Sigmoid colon (tissue), 7 donors: ENCODE measurements at regions of chr14 and their contacts with region 1.

Region 1: DNA sequence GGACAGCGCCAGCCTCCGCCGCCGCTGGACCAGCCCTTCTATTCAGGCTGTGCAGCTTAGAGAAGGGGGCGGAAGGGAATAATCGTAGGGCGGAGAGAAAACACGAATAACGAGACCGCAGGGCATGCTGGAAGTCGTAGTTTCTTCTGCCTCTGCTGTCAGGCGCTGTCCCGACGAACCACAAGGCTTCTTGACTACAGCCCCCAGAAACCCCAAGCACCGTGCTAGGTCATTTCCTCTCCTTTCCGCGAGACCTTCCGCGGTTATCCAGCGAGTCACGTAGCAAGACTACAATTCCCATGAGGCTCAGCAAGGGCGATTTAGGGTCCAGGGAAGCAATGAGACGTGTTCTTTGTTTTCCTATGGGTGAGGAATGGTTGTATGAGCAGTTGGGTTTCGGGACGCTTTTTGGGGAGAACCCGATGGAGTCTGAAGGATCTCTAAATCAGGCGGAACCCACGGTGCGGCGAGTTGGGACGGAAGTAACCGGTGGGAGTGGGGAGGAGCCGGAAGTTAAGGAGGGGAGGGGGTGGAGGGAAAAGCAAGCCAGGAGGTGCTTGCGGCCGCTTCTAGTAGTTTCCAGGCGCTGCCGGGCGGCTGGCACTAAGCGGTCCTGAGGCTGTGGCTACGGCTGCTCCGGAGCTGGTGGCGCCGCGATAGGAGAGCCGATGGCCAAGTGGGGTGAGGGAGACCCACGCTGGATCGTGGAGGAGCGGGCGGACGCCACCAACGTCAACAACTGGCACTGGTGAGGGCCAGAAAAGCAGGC is at the starts of genes AHSA1 and VIPAS39:
- DNase-seq: peak; percentile 98
- H3K4me3 ChIP-seq: peak within 1 kb of the TSS; percentile 61 to 90 (median 84)
- H3K27ac ChIP-seq: peak within 1 kb of the TSS; percentile 85 to 96 (median 90)
- H3K4me1 ChIP-seq: peaks cover 0 to 32% (median 20%) of the 10 kb centered on the region in 4 donors
- H3K27me3 ChIP-seq: no peaks in the 10 kb centered on the region
- CTCF ChIP-seq: no peak
- EP300 ChIP-seq: no peak
- POLR2A ChIP-seq: peak; percentile 52 to 71
- total RNA-seq, gene AHSA1: 98.5 to 120 (median 104) TPM
- total RNA-seq, gene VIPAS39: 18.0 to 24.3 (median 22.8) TPM

Region 2: DNA sequence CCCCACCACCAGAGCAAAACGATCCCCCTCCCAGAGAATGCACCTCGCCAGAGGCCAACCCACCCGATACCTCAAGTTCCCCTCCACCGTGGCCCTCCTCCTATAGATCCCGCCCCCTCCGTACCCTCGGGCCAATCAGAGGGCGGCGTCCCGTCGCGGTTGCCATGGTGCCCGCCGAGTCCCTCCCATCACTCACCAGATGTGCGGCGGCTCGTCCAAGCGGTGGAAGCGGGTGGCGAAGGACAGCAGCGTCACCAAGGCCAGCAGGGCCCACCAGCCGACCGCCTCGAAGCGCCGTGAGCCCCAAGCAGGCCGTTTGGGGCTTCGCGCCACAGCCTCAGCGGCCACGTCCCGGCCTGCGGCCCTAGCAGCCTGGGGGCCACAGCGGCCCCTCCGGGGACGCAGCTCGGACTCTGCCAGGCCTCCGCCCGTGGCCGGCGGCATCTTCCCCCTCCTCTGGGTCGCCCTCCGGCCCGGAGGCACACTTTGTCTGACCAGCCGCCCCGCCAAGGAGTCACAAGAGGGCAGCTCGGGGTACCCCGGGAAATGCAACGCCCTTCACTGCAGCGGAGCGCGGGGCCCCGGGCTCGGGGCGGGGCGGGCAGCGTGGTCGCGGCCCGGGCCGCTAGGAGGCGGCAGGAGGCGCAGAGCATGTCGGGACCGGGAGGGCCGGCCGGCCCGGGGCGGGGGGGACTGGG is 137.3 kb before region 1 on chr14 and contains the start of gene POMT2:
- intact Hi-C with region 1: loop called (anchors 2 kb)
- DNase-seq: peak; percentile 97
- H3K4me3 ChIP-seq: peak within 1 kb of the TSS; percentile 87 to 99 (median 96)
- H3K27ac ChIP-seq: peak within 1 kb of the TSS; percentile 94 to 99 (median 96)
- H3K4me1 ChIP-seq: peaks cover 0 to 32% (median 28%) of the 10 kb centered on the region in 4 donors
- H3K27me3 ChIP-seq: no peaks in the 10 kb centered on the region
- CTCF ChIP-seq: peak in 3 of 4 experiments; percentile 13 to 52 (median 51)
- EP300 ChIP-seq: no peak
- POLR2A ChIP-seq: peak; percentile 32 to 41
- total RNA-seq, gene POMT2: 10.5 to 21.0 (median 16.4) TPM

Region 3: DNA sequence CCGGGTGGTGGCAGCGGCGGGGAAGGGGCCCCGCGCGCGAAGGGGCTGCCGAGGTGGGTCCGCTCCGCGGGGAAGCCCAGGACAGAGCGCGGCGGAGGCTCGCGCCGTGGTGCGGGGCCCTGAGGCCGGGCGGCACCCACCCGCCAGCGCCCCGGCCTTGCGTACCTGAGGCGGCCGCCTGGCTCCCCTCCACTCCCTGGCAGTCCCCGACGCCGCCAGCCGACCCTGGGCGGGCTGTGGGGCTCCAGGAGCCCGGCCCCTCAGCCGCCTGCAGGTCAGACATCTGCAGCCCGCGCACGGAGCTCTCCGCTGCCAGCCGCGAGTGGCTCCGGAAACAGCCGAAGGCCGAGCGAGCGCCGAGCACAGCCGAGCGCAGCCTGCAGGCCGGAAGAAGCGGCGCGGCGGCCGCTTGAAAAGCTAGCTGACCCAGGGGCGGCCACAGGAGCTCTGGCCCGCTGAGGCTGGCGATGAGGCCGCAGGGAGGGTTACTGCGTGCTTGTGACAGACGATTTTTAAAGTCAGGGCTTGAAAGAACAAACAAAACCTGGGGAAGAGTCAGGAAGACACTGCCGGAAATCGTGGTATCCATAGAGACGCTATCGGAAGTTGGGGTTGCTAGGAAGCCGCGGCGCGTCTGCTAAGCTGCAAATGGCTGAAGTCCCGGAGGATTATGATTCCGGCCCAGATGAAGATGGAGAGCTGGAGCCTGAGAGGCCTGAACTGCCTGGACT is 80.8 kb before region 1 on chr14 and contains the starts of genes SAMD15 and TMED8:
- intact Hi-C with region 1: loop called (anchors 2 kb)
- DNase-seq: peak; percentile 85
- H3K4me3 ChIP-seq: peak within 1 kb of the TSS; percentile 67 to 94 (median 80)
- H3K27ac ChIP-seq: peak within 1 kb of the TSS; percentile 75 to 89 (median 84)
- H3K4me1 ChIP-seq: peaks cover 0 to 25% (median 17%) of the 10 kb centered on the region in 4 donors
- H3K27me3 ChIP-seq: no peaks in the 10 kb centered on the region
- CTCF ChIP-seq: peak in 3 of 4 experiments; percentile 15 to 32 (median 22)
- EP300 ChIP-seq: peak in 1 of 4 donors; percentile 9
- POLR2A ChIP-seq: no peak
- total RNA-seq, gene SAMD15: 0.16 to 0.55 (median 0.31) TPM
- total RNA-seq, gene TMED8: 13.6 to 15.3 (median 14.7) TPM

Region 4: GRCh38 chr14:77554207-77554606 is 96.5 kb after region 1 on chr14:
- intact Hi-C with region 1: loop called (anchors 1 kb)
- DNase-seq: no peak
- H3K4me3 ChIP-seq: no peak overlapping the region
- H3K27ac ChIP-seq: peak overlapping the region in 2 of 4 donors; percentile 8 to 9
- H3K4me1 ChIP-seq: no peaks in the 10 kb centered on the region
- H3K27me3 ChIP-seq: no peaks in the 10 kb centered on the region
- CTCF ChIP-seq: no peak
- EP300 ChIP-seq: no peak
- POLR2A ChIP-seq: no peak

Region 5: GRCh38 chr14:77616454-77617229 is 158.9 kb after region 1 on chr14 and contains the start of gene SPTLC2:
- intact Hi-C with region 1: loop called (anchors 5 kb)
- DNase-seq: peak; percentile 100
- H3K4me3 ChIP-seq: peak within 1 kb of the TSS; percentile 47 to 90 (median 81)
- H3K27ac ChIP-seq: peak within 1 kb of the TSS; percentile 82 to 85 (median 84)
- H3K4me1 ChIP-seq: peaks cover 0 to 20% (median 12%) of the 10 kb centered on the region in 4 donors
- H3K27me3 ChIP-seq: no peaks in the 10 kb centered on the region
- CTCF ChIP-seq: no peak
- EP300 ChIP-seq: no peak
- POLR2A ChIP-seq: peak; percentile 26 to 76
- total RNA-seq, gene SPTLC2: 12.4 to 16.5 (median 15.5) TPM

Region 6: DNA sequence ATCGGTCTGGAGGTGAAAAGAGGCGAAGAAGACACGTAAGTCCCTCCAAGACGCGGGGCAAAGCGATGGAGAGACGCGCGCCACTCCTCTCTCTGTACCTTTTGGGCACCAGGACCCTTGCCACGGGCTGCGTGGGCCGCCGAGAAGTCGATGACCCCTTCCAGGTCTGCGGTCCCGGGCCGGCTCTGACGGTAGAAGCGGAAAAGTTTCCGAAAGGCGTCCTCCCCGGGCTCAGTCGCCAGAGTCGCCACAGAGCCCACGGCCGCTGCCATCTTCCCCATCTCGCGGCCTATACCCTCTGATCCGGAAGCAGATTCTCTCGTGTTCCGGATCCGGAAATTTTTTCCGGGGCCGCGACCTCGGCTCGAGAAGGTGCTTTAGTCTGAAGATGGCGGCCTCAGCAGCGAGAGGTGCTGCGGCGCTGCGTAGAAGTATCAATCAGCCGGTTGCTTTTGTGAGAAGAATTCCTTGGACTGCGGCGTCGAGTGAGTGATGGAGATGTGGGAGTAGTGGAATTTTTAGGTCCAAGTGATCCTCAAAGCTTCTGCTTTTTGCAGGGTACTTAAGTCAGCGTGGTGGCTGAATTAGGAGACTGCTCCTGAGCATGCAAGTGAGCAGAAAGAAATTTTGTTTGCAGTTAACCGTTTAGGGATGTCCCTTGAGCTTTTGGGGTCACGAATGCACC is 250.2 kb after region 1 on chr14 and contains the starts of genes ALKBH1 and SLIRP:
- intact Hi-C with region 1: loop called (anchors 5 kb)
- DNase-seq: peak; percentile 92
- H3K4me3 ChIP-seq: peak within 1 kb of the TSS; percentile 86 to 98 (median 95)
- H3K27ac ChIP-seq: peak within 1 kb of the TSS; percentile 71 to 84 (median 82)
- H3K4me1 ChIP-seq: peaks cover 0 to 38% (median 30%) of the 10 kb centered on the region in 4 donors
- H3K27me3 ChIP-seq: no peaks in the 10 kb centered on the region
- CTCF ChIP-seq: no peak
- EP300 ChIP-seq: peak in 1 of 4 donors; percentile 2
- POLR2A ChIP-seq: peak; percentile 48 to 66
- total RNA-seq, gene ALKBH1: 5.4 to 14.6 (median 10.8) TPM
- total RNA-seq, gene SLIRP: 152 to 650 (median 375) TPM

Region 7: GRCh38 chr14:77721437-77721836 is 263.7 kb after region 1 on chr14:
- intact Hi-C with region 1: no loop called
- DNase-seq: no peak
- H3K4me3 ChIP-seq: no peak overlapping the region
- H3K27ac ChIP-seq: no peak overlapping the region
- H3K4me1 ChIP-seq: no peaks in the 10 kb centered on the region
- H3K27me3 ChIP-seq: no peaks in the 10 kb centered on the region
- CTCF ChIP-seq: no peak
- EP300 ChIP-seq: no peak
- POLR2A ChIP-seq: no peak

Region 8: GRCh38 chr14:77760381-77761246 is 302.9 kb after region 1 on chr14 and contains the start of gene SNW1:
- intact Hi-C with region 1: loop called (anchors 5 kb)
- DNase-seq: peak; percentile 97
- H3K4me3 ChIP-seq: peak within 1 kb of the TSS; percentile 80 to 96 (median 90)
- H3K27ac ChIP-seq: peak within 1 kb of the TSS; percentile 90 to 95 (median 94)
- H3K4me1 ChIP-seq: peaks cover 0 to 41% (median 31%) of the 10 kb centered on the region in 4 donors
- H3K27me3 ChIP-seq: no peaks in the 10 kb centered on the region
- CTCF ChIP-seq: no peak
- EP300 ChIP-seq: no peak
- POLR2A ChIP-seq: peak; percentile 64 to 72
- total RNA-seq, gene SNW1: 42.0 to 54.3 (median 46.0) TPM